Breast epithelium (tissue), 4 donors: ENCODE measurements at regions of chr20 and their contacts with region 1.

Region 1: DNA sequence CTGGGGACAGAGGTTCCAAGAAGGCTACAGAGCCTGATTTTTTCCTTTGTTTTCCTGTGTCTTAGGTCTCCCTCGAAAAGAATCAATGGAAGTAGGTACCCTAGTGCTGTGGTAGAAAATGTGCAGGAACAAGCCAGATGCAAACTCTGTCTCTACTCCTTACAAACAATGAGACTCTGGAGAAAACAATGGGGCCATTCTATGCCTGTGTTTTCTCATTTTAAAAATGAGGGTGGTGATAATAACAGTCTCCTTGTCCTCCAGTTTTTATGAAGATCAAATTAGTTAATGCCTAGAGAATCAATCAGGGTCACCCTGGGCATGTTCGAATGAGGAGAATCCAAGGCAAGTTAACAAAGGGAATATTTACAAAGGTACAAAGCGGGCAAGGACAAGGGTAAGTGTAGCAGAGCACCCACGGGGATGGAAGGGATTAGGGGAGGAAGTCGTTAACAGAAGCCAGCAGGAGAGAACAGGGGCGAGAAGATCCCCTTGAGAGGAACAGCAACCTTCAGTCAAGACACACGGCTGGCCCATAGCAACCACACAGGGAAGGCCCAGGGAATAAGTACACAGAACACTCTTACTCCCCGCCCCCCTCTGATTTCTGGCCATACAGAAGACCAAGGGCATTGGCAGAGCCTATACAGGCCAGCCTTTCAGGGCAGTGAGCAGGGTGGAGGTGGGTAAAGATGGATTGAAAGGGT is 342.8 kb downstream of the PTPRT start:
- DNase-seq: no peak
- H3K4me3 ChIP-seq: no peak overlapping the region
- H3K27ac ChIP-seq: peak overlapping the region in 1 of 2 donors; percentile 7
- H3K4me1 ChIP-seq: no peaks in the 10 kb centered on the region
- H3K27me3 ChIP-seq: no peaks in the 10 kb centered on the region
- CTCF ChIP-seq: no peak
- POLR2A ChIP-seq: no peak

Region 2: DNA sequence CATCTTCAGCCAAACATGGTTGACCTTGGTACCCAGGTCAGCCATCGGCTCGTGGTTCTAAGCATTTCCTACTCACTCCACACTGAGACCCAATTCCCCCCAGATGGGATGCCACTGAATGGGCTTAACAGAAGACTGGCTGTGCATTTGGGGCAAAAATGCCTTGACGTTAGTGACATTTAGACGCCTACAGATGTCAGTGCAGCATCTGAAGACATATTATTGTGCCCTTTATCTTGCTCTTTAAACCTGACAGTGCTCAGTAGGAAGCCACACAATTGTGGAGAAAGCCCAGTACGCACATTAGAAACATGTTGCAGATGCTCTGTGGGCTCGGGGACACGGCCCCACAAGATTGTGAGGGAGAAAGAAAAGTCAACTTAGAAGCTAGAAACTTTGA is 71.9 kb before region 1 on chr20:
- intact Hi-C with region 1: loop called (anchors 2 kb)
- DNase-seq: no peak
- H3K4me3 ChIP-seq: no peak overlapping the region
- H3K27ac ChIP-seq: no peak overlapping the region
- H3K4me1 ChIP-seq: no peaks in the 10 kb centered on the region
- H3K27me3 ChIP-seq: no peaks in the 10 kb centered on the region
- CTCF ChIP-seq: no peak
- POLR2A ChIP-seq: no peak